ENCODE measurements at regions of chr19 and their contacts with region 1.

Region 1: DNA sequence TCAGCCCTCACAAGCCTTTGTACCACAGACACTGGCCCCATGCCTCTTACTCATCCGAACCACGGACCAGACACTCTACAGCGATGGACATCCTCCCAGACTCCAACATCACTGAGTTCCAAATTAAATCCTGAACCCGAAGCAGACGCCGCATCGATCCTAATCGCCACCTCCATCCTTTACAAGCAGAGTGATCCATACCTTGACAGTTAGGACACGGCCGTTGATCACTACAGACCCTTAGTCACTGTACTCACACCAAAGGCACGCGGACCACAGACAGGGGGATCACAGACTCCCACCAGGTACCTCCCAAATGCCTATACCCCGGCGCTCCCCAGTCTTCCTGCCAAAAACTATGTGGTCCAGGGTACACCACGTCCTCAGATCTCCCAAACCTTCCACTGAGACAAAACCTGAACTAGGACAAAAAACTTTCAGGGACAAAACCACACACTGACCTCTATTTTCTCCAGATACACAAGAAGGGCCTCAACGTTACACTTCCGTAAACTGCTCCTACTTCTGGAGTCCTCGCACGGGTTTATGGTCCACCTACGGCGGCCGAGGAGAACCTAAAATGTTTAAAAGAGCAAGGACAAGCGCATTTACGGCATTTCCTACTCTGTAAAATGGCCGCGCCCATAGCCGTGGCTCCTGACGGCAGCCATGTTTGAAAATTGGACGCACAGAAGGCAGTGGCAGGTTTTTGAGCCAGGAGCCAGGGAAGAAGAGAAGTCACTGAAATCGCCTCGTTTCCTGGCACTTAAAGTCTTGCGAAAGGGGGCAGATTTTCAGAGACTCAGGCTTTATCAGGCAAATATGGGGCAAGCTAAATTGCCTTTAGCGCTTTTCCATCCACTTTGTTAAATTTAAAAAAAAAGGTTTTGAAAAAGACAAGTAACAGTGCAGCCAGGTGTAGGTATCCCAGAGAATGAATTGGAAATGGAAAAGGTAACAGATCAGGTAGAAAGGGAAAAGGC is at the start of gene ZNF350:
- DNase-seq: peak; percentile 90
- ATAC-seq: peak; percentile 95
- H3K4me3 ChIP-seq: peak within 1 kb of the TSS; percentile 53 to 65
- H3K27ac ChIP-seq: peak within 1 kb of the TSS; percentile 44
- H3K4me1 ChIP-seq: peaks cover 3 to 7% of the 10 kb centered on the region in 2 experiments; a peak in 1 of 4 replicates
- H3K27me3 ChIP-seq: no peaks in the 10 kb centered on the region
- CTCF ChIP-seq: no peak
- POLR2A ChIP-seq: no peak
- RAD21 ChIP-seq: no peak
- total RNA-seq, gene ZNF350: 2.3 TPM

Region 2: DNA sequence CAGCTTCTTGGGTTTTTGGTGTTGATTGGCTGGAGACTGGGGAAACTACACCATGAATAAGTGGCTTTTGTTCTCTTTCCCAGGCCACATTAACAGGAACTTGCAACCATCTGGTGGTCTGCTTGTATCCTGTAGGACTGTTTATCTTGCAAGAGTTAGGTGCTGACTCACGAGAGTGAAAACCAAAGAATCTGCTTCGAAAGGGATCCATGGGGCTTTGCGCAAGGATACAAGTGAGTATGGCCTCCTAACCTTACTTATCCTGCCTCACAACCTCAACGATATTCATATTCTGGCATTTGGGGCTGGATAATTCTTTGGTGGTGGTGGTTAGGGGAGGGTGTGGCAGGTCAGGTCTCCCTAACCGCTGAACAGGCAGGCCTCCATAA is 740.4 kb before region 1 on chr19:
- CTCF ChIA-PET with region 1: no interaction called
- POLR2A ChIA-PET with region 1: no interaction called
- RAD21 ChIA-PET with region 1: no interaction called
- intact Hi-C with region 1: no loop called
- DNase-seq: no peak
- ATAC-seq: no peak
- H3K4me3 ChIP-seq: no peak overlapping the region
- H3K27ac ChIP-seq: no peak overlapping the region
- H3K4me1 ChIP-seq: no peaks in the 10 kb centered on the region
- H3K27me3 ChIP-seq: no peaks in the 10 kb centered on the region
- CTCF ChIP-seq: no peak
- POLR2A ChIP-seq: no peak
- RAD21 ChIP-seq: no peak

Region 3: GRCh38 chr19:52028027-52028779 is 41.6 kb after region 1 on chr19 and contains the start of gene ZNF614:
- CTCF ChIA-PET with region 1: no interaction called
- POLR2A ChIA-PET with region 1: no interaction called
- RAD21 ChIA-PET with region 1: no interaction called
- intact Hi-C with region 1: loop called (anchors 1 kb)
- DNase-seq: peak; percentile 54
- ATAC-seq: peak; percentile 90
- H3K4me3 ChIP-seq: peak within 1 kb of the TSS; percentile 57 to 63
- H3K27ac ChIP-seq: peak within 1 kb of the TSS; percentile 62
- H3K4me1 ChIP-seq: no peaks in the 10 kb centered on the region
- H3K27me3 ChIP-seq: no peaks in the 10 kb centered on the region
- CTCF ChIP-seq: no peak
- POLR2A ChIP-seq: no peak
- RAD21 ChIP-seq: no peak
- total RNA-seq, gene ZNF614: 3.6 TPM

Measured in HCT116 (cell line).